Caco-2 (cell line): ENCODE measurements at regions of chr17 and their contacts with region 1.

Region 1: GRCh38 chr17:37047631-37048104 is 98.9 kb downstream of the AATF start:
- DNase-seq: peak; percentile 81 to 83
- H3K4me3 ChIP-seq: no peak overlapping the region
- H3K4me3 Mint-ChIP-seq: no peak overlapping the region
- H3K27ac Mint-ChIP-seq: no peak overlapping the region
- H3K4me1 ChIP-seq: no peaks in the 10 kb centered on the region
- H3K4me1 Mint-ChIP-seq: peaks cover 6% of the 10 kb centered on the region
- H3K27me3 ChIP-seq: no peaks in the 10 kb centered on the region
- H3K27me3 Mint-ChIP-seq: no peaks in the 10 kb centered on the region
- CTCF ChIP-seq: peak; percentile 90 to 92

Region 2: GRCh38 chr17:36601303-36602029 is 446.2 kb before region 1 on chr17 and contains the start of gene MRM1:
- CTCF ChIA-PET with region 1: interaction called, 11 read pairs
- POLR2A ChIA-PET with region 1: interaction called, 9 read pairs
- intact Hi-C with region 1: no loop called
- DNase-seq: peak; percentile 95 to 97
- H3K4me3 ChIP-seq: peak within 1 kb of the TSS; percentile 66
- H3K4me3 Mint-ChIP-seq: peak within 1 kb of the TSS; percentile 88
- H3K27ac Mint-ChIP-seq: peak within 1 kb of the TSS; percentile 97
- H3K4me1 ChIP-seq: peaks cover 10% of the 10 kb centered on the region
- H3K4me1 Mint-ChIP-seq: peaks cover 27% of the 10 kb centered on the region
- H3K27me3 ChIP-seq: no peaks in the 10 kb centered on the region
- H3K27me3 Mint-ChIP-seq: no peaks in the 10 kb centered on the region
- CTCF ChIP-seq: peak in 1 of 2 experiments; percentile 36
- total RNA-seq, gene MRM1: 9.3 and 13.5 TPM in 2 replicates

Region 3: GRCh38 chr17:36722121-36722902 is 325.4 kb before region 1 on chr17:
- CTCF ChIA-PET with region 1: no interaction called
- POLR2A ChIA-PET with region 1: no interaction called
- intact Hi-C with region 1: loop called (anchors 10 kb)
- DNase-seq: peak in 1 of 2 experiments; percentile 24
- H3K4me3 ChIP-seq: no peak overlapping the region
- H3K4me3 Mint-ChIP-seq: peak overlapping the region; percentile 25
- H3K27ac Mint-ChIP-seq: no peak overlapping the region
- H3K4me1 ChIP-seq: no peaks in the 10 kb centered on the region
- H3K4me1 Mint-ChIP-seq: no peaks in the 10 kb centered on the region
- H3K27me3 ChIP-seq: peaks cover 3% of the 10 kb centered on the region; the same call in 1 of the 2 replicates
- H3K27me3 Mint-ChIP-seq: peaks cover 27% of the 10 kb centered on the region
- CTCF ChIP-seq: no peak

Region 4: GRCh38 chr17:36937966-36938565 is 109.6 kb before region 1 on chr17:
- CTCF ChIA-PET with region 1: no interaction called
- POLR2A ChIA-PET with region 1: no interaction called
- intact Hi-C with region 1: loop called (anchors 10 kb)
- DNase-seq: no peak
- H3K4me3 ChIP-seq: peak overlapping the region; percentile 11; the same call in 1 of the 2 replicates
- H3K4me3 Mint-ChIP-seq: peak overlapping the region; percentile 83
- H3K27ac Mint-ChIP-seq: no peak overlapping the region
- H3K4me1 ChIP-seq: peaks cover 23% of the 10 kb centered on the region
- H3K4me1 Mint-ChIP-seq: peaks cover 6% of the 10 kb centered on the region
- H3K27me3 ChIP-seq: peaks cover 28% of the 10 kb centered on the region
- H3K27me3 Mint-ChIP-seq: peaks cover 42% of the 10 kb centered on the region
- CTCF ChIP-seq: no peak

Region 5: DNA sequence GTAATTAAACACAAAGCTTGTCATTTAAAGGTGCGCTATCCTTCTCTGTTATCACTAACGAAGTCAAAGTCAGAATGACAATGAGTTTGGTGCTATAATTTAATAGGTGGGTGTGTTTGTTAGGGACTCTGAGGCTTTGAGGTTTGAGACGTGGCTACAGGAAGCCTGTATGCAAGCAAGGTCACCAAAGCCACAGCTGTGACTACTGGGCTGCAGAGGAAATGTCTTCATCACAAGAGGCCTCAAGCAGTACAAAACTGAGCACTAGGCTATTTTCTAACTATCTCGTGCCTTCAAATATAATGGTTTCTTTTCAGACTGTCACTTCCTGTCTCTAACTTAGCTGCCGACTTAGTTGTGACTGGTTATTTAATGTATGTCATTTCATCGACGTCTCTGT is 42.3 kb after region 1 on chr17:
- CTCF ChIA-PET with region 1: interaction called, 11 read pairs
- POLR2A ChIA-PET with region 1: no interaction called
- intact Hi-C with region 1: no loop called
- DNase-seq: no peak
- H3K4me3 ChIP-seq: no peak overlapping the region
- H3K4me3 Mint-ChIP-seq: no peak overlapping the region
- H3K27ac Mint-ChIP-seq: no peak overlapping the region
- H3K4me1 ChIP-seq: peaks cover 10% of the 10 kb centered on the region; the same call in 1 of the 2 replicates
- H3K4me1 Mint-ChIP-seq: no peaks in the 10 kb centered on the region
- H3K27me3 ChIP-seq: no peaks in the 10 kb centered on the region
- H3K27me3 Mint-ChIP-seq: no peaks in the 10 kb centered on the region
- CTCF ChIP-seq: no peak

Region 6: GRCh38 chr17:37109731-37110710 is 62.4 kb after region 1 on chr17:
- CTCF ChIA-PET with region 1: no interaction called
- POLR2A ChIA-PET with region 1: no interaction called
- intact Hi-C with region 1: no loop called
- DNase-seq: no peak
- H3K4me3 ChIP-seq: no peak overlapping the region
- H3K4me3 Mint-ChIP-seq: no peak overlapping the region
- H3K27ac Mint-ChIP-seq: no peak overlapping the region
- H3K4me1 ChIP-seq: no peaks in the 10 kb centered on the region
- H3K4me1 Mint-ChIP-seq: no peaks in the 10 kb centered on the region
- H3K27me3 ChIP-seq: no peaks in the 10 kb centered on the region
- H3K27me3 Mint-ChIP-seq: no peaks in the 10 kb centered on the region
- CTCF ChIP-seq: no peak

Region 7: DNA sequence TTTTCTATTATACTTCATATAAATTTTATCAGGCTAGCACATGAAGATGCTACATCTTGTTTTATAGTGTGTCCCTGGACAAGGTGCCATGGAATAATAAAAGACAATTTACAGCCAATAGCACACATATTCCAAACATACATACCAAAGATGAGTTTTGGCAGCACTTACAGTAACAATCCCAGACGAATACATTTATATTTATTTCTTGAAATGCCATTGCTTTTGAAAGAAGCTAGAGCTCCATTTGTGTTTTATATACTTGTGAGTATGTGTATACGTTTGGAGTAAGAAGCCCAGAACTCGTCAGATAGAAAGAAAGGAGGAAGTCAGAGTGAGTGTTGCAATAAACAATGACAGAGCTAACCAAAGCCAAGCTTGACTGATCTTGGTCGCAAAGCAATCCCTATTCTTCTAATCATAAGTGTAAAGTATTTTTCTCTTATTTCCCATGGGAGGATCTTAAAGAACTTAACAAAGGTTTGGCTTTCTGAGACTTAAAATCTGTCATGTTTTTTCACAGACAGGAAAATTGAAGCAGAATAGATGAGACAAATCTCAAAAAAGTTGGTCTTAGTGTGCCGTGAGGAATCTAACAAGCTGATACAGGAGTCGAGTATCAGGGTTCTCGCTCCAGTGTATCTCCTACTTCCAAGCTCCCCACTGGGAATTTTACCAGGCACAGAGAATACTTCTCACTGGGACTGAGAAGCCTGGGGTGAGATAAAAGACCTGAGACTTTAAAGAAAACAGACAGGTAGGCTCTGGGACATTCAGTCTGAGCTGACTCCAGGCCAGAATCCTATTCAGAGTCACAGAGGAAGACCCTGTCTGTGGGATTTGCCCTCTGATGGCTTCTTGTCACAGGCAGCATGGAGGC is 76.5 kb after region 1 on chr17:
- CTCF ChIA-PET with region 1: no interaction called
- POLR2A ChIA-PET with region 1: no interaction called
- intact Hi-C with region 1: no loop called
- DNase-seq: no peak
- H3K4me3 ChIP-seq: no peak overlapping the region
- H3K4me3 Mint-ChIP-seq: no peak overlapping the region
- H3K27ac Mint-ChIP-seq: no peak overlapping the region
- H3K4me1 ChIP-seq: no peaks in the 10 kb centered on the region
- H3K4me1 Mint-ChIP-seq: no peaks in the 10 kb centered on the region
- H3K27me3 ChIP-seq: no peaks in the 10 kb centered on the region
- H3K27me3 Mint-ChIP-seq: no peaks in the 10 kb centered on the region
- CTCF ChIP-seq: no peak